A673 (cell line): ENCODE measurements at regions of chr17 and their contacts with region 1.

Region 1: DNA sequence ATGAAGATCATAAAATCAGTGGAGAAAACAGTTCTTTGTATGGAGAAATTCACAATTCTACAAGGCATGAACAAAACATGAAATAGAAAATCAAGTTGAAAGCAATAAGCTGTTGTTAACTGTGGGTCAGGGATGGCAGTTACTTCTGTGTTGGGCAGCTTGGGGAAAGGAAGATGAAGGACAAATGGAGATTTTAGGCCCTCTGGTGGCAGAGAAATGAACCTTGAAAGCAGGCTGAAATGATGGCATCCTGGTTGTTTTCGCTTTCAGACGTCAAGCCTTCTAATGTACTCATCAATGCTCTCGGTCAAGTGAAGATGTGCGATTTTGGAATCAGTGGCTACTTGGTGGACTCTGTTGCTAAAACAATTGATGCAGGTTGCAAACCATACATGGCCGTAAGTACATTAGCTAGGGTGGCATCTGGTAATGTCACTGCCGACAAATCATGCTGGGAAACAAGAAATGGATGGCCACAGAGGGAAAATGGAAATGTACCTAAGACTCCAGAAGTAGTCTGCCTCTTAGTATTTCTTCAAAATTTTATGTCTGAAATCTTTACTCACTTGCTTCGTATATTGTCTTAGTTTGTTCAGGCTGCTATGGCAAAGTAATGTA is 108.9 kb downstream of the MAP2K6 start:
- DNase-seq: peak; percentile 69
- H3K4me3 ChIP-seq: no peak overlapping the region
- H3K27ac ChIP-seq: no peak overlapping the region
- H3K4me1 ChIP-seq: no peaks in the 10 kb centered on the region
- H3K27me3 ChIP-seq: no peaks in the 10 kb centered on the region
- CTCF ChIP-seq: peak; percentile 77

Region 2: GRCh38 chr17:69246726-69247375 is 276.5 kb before region 1 on chr17:
- CTCF ChIA-PET with region 1: no interaction called
- POLR2A ChIA-PET with region 1: no interaction called
- intact Hi-C with region 1: loop called (anchors 5 kb)
- DNase-seq: peak; percentile 77
- H3K4me3 ChIP-seq: no peak overlapping the region
- H3K27ac ChIP-seq: no peak overlapping the region
- H3K4me1 ChIP-seq: peaks cover 10% of the 10 kb centered on the region
- H3K27me3 ChIP-seq: no peaks in the 10 kb centered on the region
- CTCF ChIP-seq: peak; percentile 65

Region 3: GRCh38 chr17:69335058-69335457 is 188.3 kb before region 1 on chr17:
- CTCF ChIA-PET with region 1: interaction called, 3 read pairs
- POLR2A ChIA-PET with region 1: no interaction called
- intact Hi-C with region 1: loop called (anchors 5 kb)
- DNase-seq: peak; percentile 51
- H3K4me3 ChIP-seq: no peak overlapping the region
- H3K27ac ChIP-seq: no peak overlapping the region
- H3K4me1 ChIP-seq: no peaks in the 10 kb centered on the region
- H3K27me3 ChIP-seq: no peaks in the 10 kb centered on the region
- CTCF ChIP-seq: peak; percentile 52

Region 4: GRCh38 chr17:69672924-69673323 is 149.6 kb after region 1 on chr17:
- CTCF ChIA-PET with region 1: interaction called, 10 read pairs
- POLR2A ChIA-PET with region 1: no interaction called
- intact Hi-C with region 1: no loop called
- DNase-seq: no peak
- H3K4me3 ChIP-seq: no peak overlapping the region
- H3K27ac ChIP-seq: no peak overlapping the region
- H3K4me1 ChIP-seq: no peaks in the 10 kb centered on the region
- H3K27me3 ChIP-seq: peaks cover 6% of the 10 kb centered on the region
- CTCF ChIP-seq: no peak

Region 5: DNA sequence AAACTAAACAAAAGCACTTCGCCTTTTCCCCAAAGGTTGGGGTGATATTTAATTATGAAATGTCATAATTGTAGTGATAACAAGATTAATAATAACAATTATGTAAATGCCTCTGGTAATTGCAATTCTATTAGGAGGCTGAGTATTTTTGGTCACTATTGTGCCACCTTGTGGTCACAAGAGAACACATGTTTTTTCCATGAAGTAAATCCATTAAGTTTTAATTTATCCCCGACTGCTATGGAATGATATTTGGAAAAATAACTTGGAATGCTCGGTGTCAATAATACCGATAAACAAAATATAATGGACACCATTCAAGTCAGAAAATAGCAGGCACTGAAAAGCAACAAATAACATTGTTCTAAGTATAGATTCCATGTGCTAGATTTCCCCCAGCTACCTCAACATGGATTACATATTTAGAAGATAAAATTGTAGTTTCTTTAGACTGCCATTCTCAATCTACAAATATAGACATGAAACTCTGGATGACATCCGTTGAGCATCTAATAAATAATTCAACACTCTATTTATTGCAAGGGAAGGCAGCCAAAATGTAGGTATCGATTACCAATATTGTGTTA is 621.0 kb after region 1 on chr17:
- CTCF ChIA-PET with region 1: no interaction called
- POLR2A ChIA-PET with region 1: no interaction called
- intact Hi-C with region 1: loop called (anchors 5 kb)
- DNase-seq: peak; percentile 41
- H3K4me3 ChIP-seq: no peak overlapping the region
- H3K27ac ChIP-seq: no peak overlapping the region
- H3K4me1 ChIP-seq: no peaks in the 10 kb centered on the region
- H3K27me3 ChIP-seq: no peaks in the 10 kb centered on the region
- CTCF ChIP-seq: peak; percentile 87

Region 6: GRCh38 chr17:70622368-70623260 is 1099.3 kb after region 1 on chr17:
- CTCF ChIA-PET with region 1: no interaction called
- POLR2A ChIA-PET with region 1: no interaction called
- intact Hi-C with region 1: loop called (anchors 1 kb)
- DNase-seq: peak; percentile 62
- H3K4me3 ChIP-seq: no peak overlapping the region
- H3K27ac ChIP-seq: no peak overlapping the region
- H3K4me1 ChIP-seq: no peaks in the 10 kb centered on the region
- H3K27me3 ChIP-seq: no peaks in the 10 kb centered on the region
- CTCF ChIP-seq: peak; percentile 78